B cell (primary cell): ENCODE measurements at regions of chr21 and their contacts with region 1.

Region 1: DNA sequence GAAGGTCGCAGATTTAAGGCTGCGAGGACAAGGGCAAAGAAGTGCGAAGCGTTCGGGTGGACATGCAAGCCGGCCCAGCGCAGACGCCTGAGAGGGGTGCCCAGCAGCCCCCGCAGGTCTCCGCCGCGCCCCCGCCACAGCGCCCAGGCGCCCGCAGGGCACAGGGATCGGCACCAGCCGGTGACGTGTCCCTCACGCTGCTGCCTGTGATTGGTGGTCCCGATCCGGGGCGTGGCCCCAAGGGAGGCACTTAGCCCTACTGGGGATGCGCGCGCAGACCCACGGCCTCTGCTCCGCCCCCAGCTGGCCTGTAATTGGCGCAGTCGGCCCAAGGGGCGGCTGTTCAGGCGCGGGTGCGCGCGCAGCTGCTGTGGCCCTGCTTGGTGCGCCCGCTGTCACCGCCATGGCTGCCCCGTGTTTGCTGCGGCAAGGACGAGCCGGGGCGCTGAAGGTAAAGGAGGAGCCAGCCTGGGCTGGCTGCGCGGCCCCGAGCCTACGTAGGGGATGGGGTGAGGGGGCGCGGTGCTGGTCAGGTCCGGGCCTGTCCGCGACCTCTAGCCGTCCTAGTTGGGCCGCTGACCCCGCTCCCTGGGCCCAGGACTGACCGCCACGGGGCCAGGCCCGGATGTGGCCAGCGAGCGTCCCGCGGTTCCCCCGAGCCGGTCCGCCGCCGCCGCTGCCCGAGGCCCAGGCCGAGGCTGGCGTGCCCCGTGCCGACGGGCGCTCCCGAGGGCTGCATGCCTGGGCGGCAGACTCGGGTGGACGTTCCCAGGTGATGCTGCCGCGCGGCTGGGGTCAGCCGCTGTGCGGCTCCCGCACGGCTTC is at the start of gene NDUFV3:
- DNase-seq: peak; percentile 100
- ATAC-seq: peak; percentile 97
- H3K4me3 ChIP-seq: peak within 1 kb of the TSS; percentile 68 to 83 (median 70)
- H3K4me3 Mint-ChIP-seq: peak within 1 kb of the TSS; percentile 94
- H3K27ac ChIP-seq: peak within 1 kb of the TSS; percentile 80 to 96
- H3K27ac Mint-ChIP-seq: peak within 1 kb of the TSS; percentile 95
- H3K4me1 ChIP-seq: peaks cover 7 to 11% of the 10 kb centered on the region in 2 donors
- H3K4me1 Mint-ChIP-seq: peaks cover 10% of the 10 kb centered on the region
- H3K27me3 ChIP-seq: no peaks in the 10 kb centered on the region
- H3K27me3 Mint-ChIP-seq: no peaks in the 10 kb centered on the region
- CTCF ChIP-seq: no peak
- total RNA-seq, gene NDUFV3: 29.7 and 30.8 TPM in 2 replicates

Region 2: GRCh38 chr21:42593007-42593806 is 299.9 kb before region 1 on chr21:
- CTCF ChIA-PET with region 1: no interaction called
- POLR2A ChIA-PET with region 1: no interaction called
- intact Hi-C with region 1: no loop called
- DNase-seq: peak; percentile 69
- ATAC-seq: peak; percentile 73
- H3K4me3 ChIP-seq: no peak overlapping the region
- H3K4me3 Mint-ChIP-seq: no peak overlapping the region
- H3K27ac ChIP-seq: no peak overlapping the region
- H3K27ac Mint-ChIP-seq: no peak overlapping the region
- H3K4me1 ChIP-seq: peaks cover 10 to 17% of the 10 kb centered on the region in 2 donors
- H3K4me1 Mint-ChIP-seq: peaks cover 14% of the 10 kb centered on the region
- H3K27me3 ChIP-seq: peaks cover 0 to 12% (median 0%) of the 10 kb centered on the region in 4 experiments
- H3K27me3 Mint-ChIP-seq: peaks cover 18% of the 10 kb centered on the region
- CTCF ChIP-seq: peak; percentile 74

Region 3: DNA sequence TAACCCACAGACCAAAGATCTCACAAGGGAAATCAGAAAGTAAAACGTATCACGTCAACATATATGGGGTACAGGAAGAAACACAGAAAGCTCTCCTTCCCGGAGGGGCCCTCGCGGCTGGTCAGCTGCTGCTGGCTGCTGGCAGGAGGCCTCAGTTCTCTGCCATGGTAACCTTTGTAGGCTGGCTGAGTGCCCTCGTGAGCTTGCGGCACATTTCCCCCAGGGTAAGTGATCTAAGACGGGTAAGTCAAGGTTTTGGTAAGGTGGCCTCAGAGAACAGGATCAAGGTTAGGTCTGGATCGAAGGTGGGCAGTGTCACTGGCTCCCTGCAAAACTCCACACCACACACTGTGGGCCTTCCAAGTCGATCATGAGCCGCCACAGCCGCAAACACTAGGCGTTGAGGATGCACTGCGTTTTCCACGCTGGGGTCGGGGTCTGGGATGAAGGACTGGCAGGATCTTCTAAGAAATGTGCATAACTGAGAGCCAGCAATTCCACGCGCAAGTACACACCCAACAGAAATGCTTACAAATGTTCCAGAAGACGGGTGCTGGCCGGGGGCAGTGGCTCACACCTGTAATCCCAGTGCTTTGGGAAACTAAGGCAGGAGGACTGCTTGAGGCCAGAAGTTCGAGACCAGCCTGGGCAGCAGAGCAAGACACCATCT is 47.7 kb before region 1 on chr21:
- CTCF ChIA-PET with region 1: no interaction called
- POLR2A ChIA-PET with region 1: no interaction called
- intact Hi-C with region 1: no loop called
- DNase-seq: no peak
- ATAC-seq: no peak
- H3K4me3 ChIP-seq: no peak overlapping the region
- H3K4me3 Mint-ChIP-seq: no peak overlapping the region
- H3K27ac ChIP-seq: no peak overlapping the region
- H3K27ac Mint-ChIP-seq: no peak overlapping the region
- H3K4me1 ChIP-seq: no peaks in the 10 kb centered on the region
- H3K4me1 Mint-ChIP-seq: no peaks in the 10 kb centered on the region
- H3K27me3 ChIP-seq: no peaks in the 10 kb centered on the region
- H3K27me3 Mint-ChIP-seq: no peaks in the 10 kb centered on the region
- CTCF ChIP-seq: no peak

Region 4: GRCh38 chr21:42878993-42879787 is 14.0 kb before region 1 on chr21 and contains the start of gene WDR4:
- CTCF ChIA-PET with region 1: interaction called, 3 read pairs
- POLR2A ChIA-PET with region 1: interaction called, 9 read pairs
- intact Hi-C with region 1: loop called (anchors 1 kb)
- DNase-seq: peak; percentile 99
- ATAC-seq: peak; percentile 90
- H3K4me3 ChIP-seq: peak within 1 kb of the TSS; percentile 78 to 96 (median 82)
- H3K4me3 Mint-ChIP-seq: peak within 1 kb of the TSS; percentile 96
- H3K27ac ChIP-seq: peak within 1 kb of the TSS; percentile 83 to 97
- H3K27ac Mint-ChIP-seq: peak within 1 kb of the TSS; percentile 99
- H3K4me1 ChIP-seq: peaks cover 16 to 20% of the 10 kb centered on the region in 2 donors
- H3K4me1 Mint-ChIP-seq: peaks cover 30% of the 10 kb centered on the region
- H3K27me3 ChIP-seq: no peaks in the 10 kb centered on the region
- H3K27me3 Mint-ChIP-seq: no peaks in the 10 kb centered on the region
- CTCF ChIP-seq: no peak
- total RNA-seq, gene WDR4: 40.1 TPM in 2 replicates

Region 5: DNA sequence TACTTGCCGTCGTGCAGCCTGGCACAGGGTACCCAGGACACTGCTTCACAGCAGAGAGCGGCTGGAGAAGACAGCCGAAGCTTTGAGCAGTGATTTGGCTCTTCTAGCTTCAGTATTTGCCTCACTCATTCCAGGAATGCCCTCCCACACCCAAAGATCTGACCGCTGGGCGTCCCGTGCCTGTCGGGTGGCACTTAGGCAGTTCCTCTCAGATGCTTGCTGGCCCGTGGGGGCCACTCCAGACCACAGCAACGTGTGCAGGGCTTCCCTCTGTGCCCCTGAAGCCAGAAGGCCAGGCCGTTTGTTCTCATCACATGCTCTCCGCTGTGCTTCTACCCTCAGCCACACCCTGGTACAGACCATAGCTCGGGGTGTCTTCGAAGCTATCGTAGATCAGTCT is 783.2 kb after region 1 on chr21:
- CTCF ChIA-PET with region 1: no interaction called
- POLR2A ChIA-PET with region 1: interaction called, 10 read pairs
- intact Hi-C with region 1: no loop called
- DNase-seq: peak; percentile 1
- ATAC-seq: no peak
- H3K4me3 ChIP-seq: no peak overlapping the region
- H3K4me3 Mint-ChIP-seq: no peak overlapping the region
- H3K27ac ChIP-seq: no peak overlapping the region
- H3K27ac Mint-ChIP-seq: no peak overlapping the region
- H3K4me1 ChIP-seq: no peaks in the 10 kb centered on the region
- H3K4me1 Mint-ChIP-seq: no peaks in the 10 kb centered on the region
- H3K27me3 ChIP-seq: no peaks in the 10 kb centered on the region
- H3K27me3 Mint-ChIP-seq: no peaks in the 10 kb centered on the region
- CTCF ChIP-seq: no peak